Activated CD4-positive, alpha-beta memory T cell treated with anti-CD3 and anti-CD28 coated beads for 36 hours (primary cell): ENCODE measurements at regions of chr11 and their contacts with region 1.

Region 1: GRCh38 chr11:66311965-66312548 is 4.8 kb downstream of the CD248 start:
- DNase-seq: peak; percentile 97
- H3K4me3 Mint-ChIP-seq: peak overlapping the region; percentile 77
- H3K27ac Mint-ChIP-seq: peak overlapping the region; percentile 77
- H3K4me1 Mint-ChIP-seq: peaks cover 5% of the 10 kb centered on the region
- H3K27me3 Mint-ChIP-seq: no peaks in the 10 kb centered on the region

Region 2: DNA sequence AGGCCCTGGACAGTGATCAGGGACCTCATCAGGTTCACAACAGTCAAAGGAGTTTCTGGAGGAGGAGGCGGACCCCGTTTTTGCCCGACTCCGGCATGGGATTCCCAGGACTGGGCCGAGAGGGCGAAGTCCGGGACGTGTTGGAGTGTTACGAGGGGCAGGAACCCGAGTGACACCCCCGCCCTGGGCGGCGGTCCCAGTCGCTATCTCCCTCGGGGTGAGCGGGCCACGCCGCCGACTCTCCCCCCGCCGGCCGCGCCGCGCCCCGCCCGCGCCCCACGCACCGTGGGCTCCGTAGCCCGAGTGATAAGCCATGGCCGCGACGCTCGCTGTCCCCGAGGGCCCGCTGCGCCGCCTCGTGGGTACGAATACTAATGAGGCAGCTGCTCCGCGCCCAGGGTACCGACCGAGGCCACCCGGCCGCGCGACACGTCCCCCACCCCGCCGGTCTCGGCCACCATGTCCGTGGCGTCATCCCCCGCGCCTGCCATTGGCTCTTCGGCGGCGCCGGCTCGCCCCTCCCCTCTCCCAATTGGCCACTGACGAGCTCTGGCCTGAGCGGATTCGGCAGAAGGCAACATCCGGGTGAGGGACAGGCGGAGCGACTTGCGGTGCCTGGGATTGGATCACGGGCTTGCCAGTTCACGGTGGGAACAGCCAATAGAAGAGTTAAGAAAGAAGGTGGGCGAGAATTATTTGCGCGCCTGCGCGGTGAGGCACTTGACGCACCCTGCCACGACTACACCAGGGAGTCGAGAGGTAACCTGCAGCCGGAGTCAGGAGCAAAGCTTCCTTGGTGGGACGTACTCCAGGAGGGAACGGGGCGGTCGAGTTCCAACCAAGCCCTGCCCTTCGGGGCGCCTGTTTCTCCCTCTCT is 23.1 kb before region 1 on chr11 and contains the start of gene YIF1A:
- CTCF ChIA-PET with region 1: interaction called, 25 read pairs
- POLR2A ChIA-PET with region 1: interaction called, 9 read pairs
- intact Hi-C with region 1: loop called (anchors 1 kb)
- DNase-seq: peak; percentile 99
- H3K4me3 Mint-ChIP-seq: peak within 1 kb of the TSS; percentile 87
- H3K27ac Mint-ChIP-seq: peak within 1 kb of the TSS; percentile 91
- H3K4me1 Mint-ChIP-seq: peaks cover 33% of the 10 kb centered on the region
- H3K27me3 Mint-ChIP-seq: peaks cover 12% of the 10 kb centered on the region
- total RNA-seq, gene YIF1A: 63.1 to 65.8 TPM

Region 3: DNA sequence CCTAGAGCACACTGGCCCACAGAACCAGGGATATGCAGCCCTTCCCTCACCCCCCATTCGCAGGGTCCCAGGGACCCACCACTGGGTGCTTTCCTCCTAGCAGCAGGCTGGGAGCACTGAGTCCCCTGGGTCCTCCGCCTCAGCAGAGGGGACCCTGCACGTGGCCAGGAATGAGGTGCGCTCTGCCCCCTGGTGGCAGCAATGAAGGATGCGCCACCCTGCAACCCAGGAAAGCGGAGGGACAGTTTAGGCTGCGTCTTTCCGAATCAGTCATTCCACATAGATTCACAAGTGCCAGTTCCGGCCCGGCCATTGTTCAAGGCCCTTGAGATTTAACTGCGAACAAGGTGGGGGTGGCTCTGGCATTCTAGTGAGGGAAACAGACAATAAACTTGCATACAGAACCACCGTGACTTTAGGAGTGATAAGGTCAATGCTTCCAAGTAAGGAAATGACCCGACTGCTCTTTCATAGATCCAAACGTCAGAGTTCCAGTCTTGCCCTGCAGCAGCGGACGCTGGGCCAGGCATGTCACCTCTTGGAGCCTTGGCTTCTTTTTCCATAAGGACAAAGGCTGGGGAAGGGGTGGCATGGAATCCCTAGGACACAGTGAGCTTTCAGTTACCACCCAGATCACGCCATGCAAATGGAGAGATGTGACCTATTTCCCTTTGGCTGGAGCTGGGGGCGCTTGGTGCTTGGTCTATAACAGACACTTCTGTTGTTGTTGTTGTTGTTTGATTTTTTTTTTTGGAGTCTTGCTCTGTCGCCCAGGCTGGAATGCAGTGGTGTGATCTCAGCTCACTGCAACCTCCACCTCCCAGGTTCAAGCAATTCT is 16.5 kb after region 1 on chr11:
- CTCF ChIA-PET with region 1: interaction called, 29 read pairs
- POLR2A ChIA-PET with region 1: interaction called, 3 read pairs
- intact Hi-C with region 1: loop called (anchors 1 kb)
- DNase-seq: peak; percentile 90
- H3K4me3 Mint-ChIP-seq: no peak overlapping the region
- H3K27ac Mint-ChIP-seq: peak overlapping the region; percentile 40
- H3K4me1 Mint-ChIP-seq: peaks cover 27% of the 10 kb centered on the region
- H3K27me3 Mint-ChIP-seq: no peaks in the 10 kb centered on the region

Region 4: GRCh38 chr11:66344550-66345315 is 32.7 kb after region 1 on chr11 and contains the start of gene BRMS1:
- CTCF ChIA-PET with region 1: interaction called, 33 read pairs
- POLR2A ChIA-PET with region 1: interaction called, 6 read pairs
- intact Hi-C with region 1: loop called (anchors 1 kb)
- DNase-seq: peak; percentile 98
- H3K4me3 Mint-ChIP-seq: peak within 1 kb of the TSS; percentile 94
- H3K27ac Mint-ChIP-seq: peak within 1 kb of the TSS; percentile 85
- H3K4me1 Mint-ChIP-seq: peaks cover 50% of the 10 kb centered on the region
- H3K27me3 Mint-ChIP-seq: peaks cover 3% of the 10 kb centered on the region
- total RNA-seq, gene BRMS1: 29.3 to 31.2 TPM

Region 5: GRCh38 chr11:66386171-66387069 is 74.4 kb after region 1 on chr11:
- CTCF ChIA-PET with region 1: interaction called, 45 read pairs
- POLR2A ChIA-PET with region 1: interaction called, 4 read pairs
- intact Hi-C with region 1: loop called (anchors 1 kb)
- DNase-seq: peak; percentile 88
- H3K4me3 Mint-ChIP-seq: peak overlapping the region; percentile 1
- H3K27ac Mint-ChIP-seq: no peak overlapping the region
- H3K4me1 Mint-ChIP-seq: peaks cover 8% of the 10 kb centered on the region
- H3K27me3 Mint-ChIP-seq: peaks cover 1% of the 10 kb centered on the region